ENCODE measurements at regions of chr9 and their contacts with region 1.

Region 1: GRCh38 chr9:38154501-38155421 is 85.7 kb upstream of the SHB start:
- DNase-seq: no peak
- H3K4me3 Mint-ChIP-seq: no peak overlapping the region
- H3K27ac Mint-ChIP-seq: no peak overlapping the region
- H3K4me1 Mint-ChIP-seq: no peaks in the 10 kb centered on the region
- H3K27me3 Mint-ChIP-seq: no peaks in the 10 kb centered on the region

Region 2: GRCh38 chr9:38228331-38229103 is 73.8 kb after region 1 on chr9:
- intact Hi-C with region 1: no loop called
- DNase-seq: no peak
- H3K4me3 Mint-ChIP-seq: no peak overlapping the region
- H3K27ac Mint-ChIP-seq: no peak overlapping the region
- H3K4me1 Mint-ChIP-seq: peaks cover 17% of the 10 kb centered on the region
- H3K27me3 Mint-ChIP-seq: peaks cover 17% of the 10 kb centered on the region

Region 3: GRCh38 chr9:38243993-38244392 is 89.2 kb after region 1 on chr9:
- intact Hi-C with region 1: no loop called
- DNase-seq: no peak
- H3K4me3 Mint-ChIP-seq: no peak overlapping the region
- H3K27ac Mint-ChIP-seq: no peak overlapping the region
- H3K4me1 Mint-ChIP-seq: no peaks in the 10 kb centered on the region
- H3K27me3 Mint-ChIP-seq: peaks cover under 1% of the 10 kb centered on the region

Region 4: GRCh38 chr9:38362852-38363593 is 208.3 kb after region 1 on chr9:
- intact Hi-C with region 1: loop called (anchors 5 kb)
- DNase-seq: no peak
- H3K4me3 Mint-ChIP-seq: peak overlapping the region; percentile 49
- H3K27ac Mint-ChIP-seq: no peak overlapping the region
- H3K4me1 Mint-ChIP-seq: no peaks in the 10 kb centered on the region
- H3K27me3 Mint-ChIP-seq: peaks cover 2% of the 10 kb centered on the region